ENCODE measurements at regions of chr10 and their contacts with region 1.

Region 1: GRCh38 chr10:93503075-93503474 is 6.7 kb downstream of the CEP55 start:
- H3K4me3 ChIP-seq: no peak overlapping the region
- H3K27ac ChIP-seq: no peak overlapping the region
- H3K4me1 ChIP-seq: no peaks in the 10 kb centered on the region; the same call in 1 of the 2 replicates
- CTCF ChIP-seq: no peak

Region 2: GRCh38 chr10:93299606-93300287 is 203.3 kb before region 1 on chr10:
- CTCF ChIA-PET with region 1: no interaction called
- POLR2A ChIA-PET with region 1: no interaction called
- H3K4me3 ChIP-seq: no peak overlapping the region
- H3K27ac ChIP-seq: no peak overlapping the region
- H3K4me1 ChIP-seq: no peaks in the 10 kb centered on the region
- CTCF ChIP-seq: no peak

Region 3: DNA sequence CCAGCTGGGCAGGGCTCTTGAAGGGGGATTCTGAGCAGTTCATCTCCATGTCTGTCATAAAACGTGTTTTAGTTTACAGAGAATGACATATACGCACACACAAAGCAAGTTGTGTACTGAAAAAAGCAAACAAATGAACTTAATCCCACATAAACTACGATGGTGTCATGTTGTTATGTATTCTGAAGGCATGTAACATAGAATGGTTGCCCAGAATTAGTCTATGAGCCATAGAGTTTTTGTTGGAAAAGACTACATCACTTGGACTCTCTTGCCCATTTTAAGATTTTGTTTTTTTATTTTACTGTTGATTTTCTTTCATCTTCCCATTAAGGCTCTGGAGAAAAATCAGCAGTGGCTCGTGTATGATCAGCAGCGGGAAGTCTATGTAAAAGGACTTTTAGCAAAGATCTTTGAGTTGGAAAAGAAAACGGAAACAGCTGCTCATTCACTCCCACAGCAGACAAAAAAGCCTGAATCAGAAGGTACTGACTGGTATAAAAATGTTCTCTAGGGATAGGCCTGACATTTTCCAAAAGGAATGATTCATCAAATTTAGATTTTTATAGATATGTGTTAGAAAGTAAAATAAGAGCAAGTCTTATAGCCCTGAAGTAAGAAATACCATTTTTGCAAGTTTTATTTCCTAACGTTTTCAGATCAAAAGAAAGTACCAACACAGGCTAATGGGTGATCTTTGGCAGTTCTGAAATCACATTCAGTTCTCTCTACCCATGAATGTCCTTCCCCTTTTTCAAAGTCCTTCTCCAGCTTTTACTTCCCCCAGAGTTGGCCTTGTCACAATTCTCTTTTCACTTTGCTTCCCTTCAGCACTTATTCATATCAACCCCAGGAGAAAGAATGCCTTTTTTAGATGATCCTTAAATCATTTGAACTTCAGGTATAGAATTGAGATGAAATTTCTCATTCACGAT is 12.3 kb after region 1 on chr10:
- CTCF ChIA-PET with region 1: interaction called, 16 read pairs
- POLR2A ChIA-PET with region 1: interaction called, 3 read pairs
- H3K4me3 ChIP-seq: no peak overlapping the region
- H3K27ac ChIP-seq: no peak overlapping the region
- H3K4me1 ChIP-seq: no peaks in the 10 kb centered on the region
- CTCF ChIP-seq: no peak

Region 4: GRCh38 chr10:93573051-93573909 is 70.2 kb after region 1 on chr10:
- CTCF ChIA-PET with region 1: no interaction called
- POLR2A ChIA-PET with region 1: no interaction called
- H3K4me3 ChIP-seq: no peak overlapping the region
- H3K27ac ChIP-seq: no peak overlapping the region
- H3K4me1 ChIP-seq: peaks cover 6% of the 10 kb centered on the region; the same call in 1 of the 2 replicates
- CTCF ChIP-seq: no peak

Measured in HEK293 (cell line).